ENCODE measurements at regions of chr1 and their contacts with region 1.

Region 1: GRCh38 chr1:39845275-39846116 is 37.8 kb downstream of the TRIT1 start:
- DNase-seq: peak; percentile 96
- H3K4me3 ChIP-seq: no peak overlapping the region
- H3K27ac ChIP-seq: no peak overlapping the region
- H3K4me1 ChIP-seq: peaks cover 8% of the 10 kb centered on the region
- H3K27me3 ChIP-seq: no peaks in the 10 kb centered on the region
- CTCF ChIP-seq: no peak
- POLR2A ChIP-seq: no peak

Region 2: GRCh38 chr1:39799770-39800470 is 45.6 kb before region 1 on chr1:
- CTCF ChIA-PET with region 1: no interaction called
- POLR2A ChIA-PET with region 1: no interaction called
- dilution Hi-C with region 1: no loop called
- intact Hi-C with region 1: no loop called
- DNase-seq: peak; percentile 35
- H3K4me3 ChIP-seq: no peak overlapping the region
- H3K27ac ChIP-seq: no peak overlapping the region
- H3K4me1 ChIP-seq: no peaks in the 10 kb centered on the region
- H3K27me3 ChIP-seq: peaks cover 0 to 3% of the 10 kb centered on the region in 2 experiments
- CTCF ChIP-seq: peak; percentile 75 to 85
- POLR2A ChIP-seq: no peak

Region 3: GRCh38 chr1:39886757-39887231 is 41.3 kb after region 1 on chr1:
- CTCF ChIA-PET with region 1: no interaction called
- POLR2A ChIA-PET with region 1: no interaction called
- dilution Hi-C with region 1: no loop called
- intact Hi-C with region 1: loop called (anchors 1 kb)
- DNase-seq: no peak
- H3K4me3 ChIP-seq: no peak overlapping the region
- H3K27ac ChIP-seq: no peak overlapping the region
- H3K4me1 ChIP-seq: peaks cover 10% of the 10 kb centered on the region
- H3K27me3 ChIP-seq: peaks cover 2 to 4% of the 10 kb centered on the region in 2 experiments
- CTCF ChIP-seq: no peak
- POLR2A ChIP-seq: no peak

Region 4: GRCh38 chr1:40373338-40374283 is 528.1 kb after region 1 on chr1 and contains the start of gene SMAP2:
- CTCF ChIA-PET with region 1: no interaction called
- POLR2A ChIA-PET with region 1: no interaction called
- dilution Hi-C with region 1: no loop called
- intact Hi-C with region 1: loop called (anchors 5 kb)
- DNase-seq: peak; percentile 96
- H3K4me3 ChIP-seq: peak within 1 kb of the TSS; percentile 69 to 90 (median 89)
- H3K27ac ChIP-seq: no peak within 1 kb of the TSS
- H3K4me1 ChIP-seq: peaks cover 7% of the 10 kb centered on the region
- H3K27me3 ChIP-seq: peaks cover 0 to 4% of the 10 kb centered on the region in 2 experiments
- CTCF ChIP-seq: no peak
- POLR2A ChIP-seq: no peak
- total RNA-seq, gene SMAP2: 11.1 and 12.0 TPM in 2 replicates